Heart right ventricle (tissue), 16 donors: ENCODE measurements at regions of chr21 and their contacts with region 1.

Region 1: GRCh38 chr21:33542640-33543504 is at the start of gene SON:
- DNase-seq: peak; percentile 98 to 99
- ATAC-seq: peak; percentile 97 to 99 (median 98)
- H3K4me3 ChIP-seq: peak within 1 kb of the TSS; percentile 73 to 85 (median 78)
- H3K27ac ChIP-seq: peak within 1 kb of the TSS; percentile 83 to 100 (median 99)
- H3K4me1 ChIP-seq: peaks cover 0 to 45% (median 40%) of the 10 kb centered on the region in 9 donors
- H3K27me3 ChIP-seq: no peaks in the 10 kb centered on the region
- CTCF ChIP-seq: peak in 1 of 9 donors; percentile 8
- total RNA-seq, gene SON: 137 to 176 (median 156) TPM

Region 2: DNA sequence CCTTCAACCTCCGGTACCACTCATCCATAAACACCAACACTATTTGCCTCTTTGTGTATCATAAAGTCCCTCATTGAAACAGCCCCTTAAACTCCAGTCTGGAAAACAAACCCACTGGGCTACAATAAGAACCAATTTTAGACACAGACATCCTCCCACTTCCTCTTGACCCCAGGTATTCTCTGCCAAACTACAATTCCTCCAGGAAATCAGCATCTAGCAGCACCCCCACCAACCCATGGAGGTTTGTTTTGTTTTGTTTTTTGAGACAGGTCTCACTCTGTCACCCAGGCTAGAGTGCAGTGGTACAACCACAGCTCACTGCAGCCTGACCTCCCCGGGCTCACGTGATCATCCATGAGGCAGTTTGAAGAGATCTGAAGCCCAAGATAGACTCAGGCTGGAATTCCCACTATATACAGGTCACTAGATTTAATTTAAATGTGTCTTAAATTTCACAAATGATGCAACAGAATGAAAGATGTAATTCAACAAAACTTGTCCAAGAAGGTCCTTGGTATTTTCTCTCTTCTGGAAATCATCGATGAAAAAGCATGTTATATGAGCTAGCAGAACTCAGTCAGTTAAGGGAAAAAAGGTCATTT is 987.9 kb before region 1 on chr21:
- intact Hi-C with region 1: no loop called
- DNase-seq: no peak
- ATAC-seq: peak in 3 of 8 donors; percentile 40 to 78 (median 61)
- H3K4me3 ChIP-seq: no peak overlapping the region
- H3K27ac ChIP-seq: peak overlapping the region in 4 of 10 donors; percentile 42 to 65 (median 44)
- H3K4me1 ChIP-seq: peaks cover 0 to 14% (median 4%) of the 10 kb centered on the region in 9 donors
- H3K27me3 ChIP-seq: no peaks in the 10 kb centered on the region
- CTCF ChIP-seq: no peak

Region 3: DNA sequence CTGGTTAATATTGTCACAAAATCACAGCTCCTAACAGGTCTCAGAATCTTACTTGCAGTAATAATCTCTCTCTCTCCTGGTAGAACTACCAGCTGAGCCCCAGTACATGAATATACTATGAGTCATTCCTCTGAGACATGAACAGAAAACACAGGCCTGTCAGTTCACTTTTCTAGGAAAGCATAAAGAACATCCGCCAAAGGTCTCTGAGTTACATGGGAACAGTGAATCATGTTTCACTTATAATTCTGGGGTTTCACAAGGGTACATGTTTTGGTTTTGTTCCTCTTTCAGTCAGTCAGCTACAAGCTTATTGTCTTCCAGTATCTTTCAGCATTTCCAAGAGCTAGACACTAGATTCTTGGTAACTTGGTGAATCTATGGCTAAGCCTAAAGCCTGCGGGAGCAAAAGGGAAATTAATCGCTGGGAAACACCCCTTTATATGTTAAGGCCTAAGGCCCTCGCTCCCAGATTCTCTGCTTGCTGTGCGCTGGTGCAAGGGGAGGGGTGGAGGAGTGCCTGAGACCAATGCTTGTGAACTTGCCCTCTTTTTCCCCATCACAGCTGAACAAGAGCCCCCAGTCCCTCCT is 108.0 kb before region 1 on chr21:
- intact Hi-C with region 1: no loop called
- DNase-seq: peak in 1 of 2 donors; percentile 20
- ATAC-seq: peak; percentile 41 to 90 (median 82)
- H3K4me3 ChIP-seq: no peak overlapping the region
- H3K27ac ChIP-seq: peak overlapping the region; percentile 24 to 89 (median 80)
- H3K4me1 ChIP-seq: peaks cover 0 to 44% (median 19%) of the 10 kb centered on the region in 9 donors
- H3K27me3 ChIP-seq: no peaks in the 10 kb centered on the region
- CTCF ChIP-seq: no peak

Region 4: GRCh38 chr21:33479679-33480480 is 63.0 kb before region 1 on chr21 and contains the start of gene TMEM50B:
- intact Hi-C with region 1: loop called in 2 of 10 experiments (anchors 2 to 5 kb)
- DNase-seq: peak; percentile 95 to 99
- ATAC-seq: peak; percentile 97 to 98 (median 98)
- H3K4me3 ChIP-seq: peak within 1 kb of the TSS; percentile 91 to 99 (median 95)
- H3K27ac ChIP-seq: peak within 1 kb of the TSS; percentile 95 to 99 (median 98)
- H3K4me1 ChIP-seq: peaks cover 0 to 31% (median 16%) of the 10 kb centered on the region in 9 donors
- H3K27me3 ChIP-seq: no peaks in the 10 kb centered on the region
- CTCF ChIP-seq: peak; percentile 26 to 72 (median 58)
- total RNA-seq, gene TMEM50B: 26.7 to 40.7 (median 29.6) TPM

Region 5: DNA sequence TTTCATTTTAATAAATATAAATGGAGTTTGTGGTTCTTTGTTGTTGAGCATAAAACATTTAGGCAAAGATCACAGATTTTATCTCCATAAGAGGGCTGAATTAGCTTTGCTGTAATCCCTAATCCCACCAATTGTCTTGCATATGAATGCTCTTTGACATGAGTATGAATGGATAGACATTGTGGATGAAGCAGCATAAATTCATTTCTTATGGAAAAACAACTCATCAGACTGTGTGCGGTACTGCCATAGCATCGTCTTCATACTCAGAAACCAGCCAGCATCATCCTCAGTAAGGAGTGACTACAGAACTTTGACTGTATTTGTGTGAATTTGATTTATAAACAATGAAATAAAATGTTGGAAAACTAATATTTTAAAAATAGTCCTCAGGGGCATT is 19.5 kb after region 1 on chr21:
- intact Hi-C with region 1: loop called in 1 of 10 experiments (anchors 1 kb)
- DNase-seq: no peak
- ATAC-seq: no peak
- H3K4me3 ChIP-seq: no peak overlapping the region
- H3K27ac ChIP-seq: no peak overlapping the region
- H3K4me1 ChIP-seq: peaks cover 0 to 36% (median 14%) of the 10 kb centered on the region in 9 donors
- H3K27me3 ChIP-seq: no peaks in the 10 kb centered on the region
- CTCF ChIP-seq: no peak

Region 6: GRCh38 chr21:33588485-33589335 is 45.8 kb after region 1 on chr21 and contains the start of gene DONSON:
- intact Hi-C with region 1: loop called in 3 of 10 experiments (anchors 1 to 5 kb)
- DNase-seq: peak; percentile 86 to 94
- ATAC-seq: peak; percentile 93 to 98 (median 97)
- H3K4me3 ChIP-seq: peak within 1 kb of the TSS; percentile 54 to 92 (median 76)
- H3K27ac ChIP-seq: peak within 1 kb of the TSS in 9 of 10 donors; percentile 77 to 94 (median 90)
- H3K4me1 ChIP-seq: peaks cover 0 to 22% (median 16%) of the 10 kb centered on the region in 9 donors
- H3K27me3 ChIP-seq: no peaks in the 10 kb centered on the region
- CTCF ChIP-seq: peak in 3 of 9 donors; percentile 11 to 34 (median 25)
- total RNA-seq, gene DONSON: 3.3 to 6.9 (median 5.5) TPM